ENCODE measurements at regions of chr16 and their contacts with region 1.

Region 1: DNA sequence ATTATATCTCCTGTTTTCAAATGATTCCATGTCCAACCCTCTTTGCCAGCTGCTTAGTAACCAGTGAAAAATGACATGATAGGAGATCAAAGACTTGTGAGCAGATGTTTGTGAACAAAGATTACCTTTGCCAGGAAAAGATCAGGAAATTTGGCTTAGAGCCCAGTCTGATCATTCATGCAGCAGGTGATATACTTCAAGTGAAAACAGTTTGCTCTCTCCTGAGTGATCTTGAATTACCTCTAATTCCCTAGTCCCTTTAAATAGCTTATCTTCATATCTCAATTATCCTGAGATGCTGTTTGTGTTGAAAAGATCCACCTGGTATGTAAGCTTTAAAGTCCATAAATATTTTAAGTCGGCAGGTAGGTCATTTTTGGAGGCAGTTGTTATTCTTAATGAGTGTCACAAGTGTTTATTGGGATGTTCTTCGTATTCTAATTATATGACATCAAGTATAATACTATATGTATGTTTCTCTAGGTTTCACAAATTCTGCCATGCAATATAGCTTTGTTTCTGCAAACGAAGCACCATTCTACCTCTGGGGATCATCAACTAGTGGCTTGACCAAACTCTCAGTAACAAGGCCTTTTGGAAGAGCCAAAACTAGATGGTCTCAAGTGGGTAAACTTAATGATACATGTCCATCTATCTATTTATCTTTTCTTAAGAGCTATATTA is 13.2 kb upstream of the VPS35L start:
- DNase-seq: no peak
- H3K4me3 ChIP-seq: no peak overlapping the region
- H3K27ac ChIP-seq: no peak overlapping the region
- H3K4me1 ChIP-seq: peaks cover 4% of the 10 kb centered on the region
- H3K27me3 ChIP-seq: no peaks in the 10 kb centered on the region
- CTCF ChIP-seq: no peak

Region 2: DNA sequence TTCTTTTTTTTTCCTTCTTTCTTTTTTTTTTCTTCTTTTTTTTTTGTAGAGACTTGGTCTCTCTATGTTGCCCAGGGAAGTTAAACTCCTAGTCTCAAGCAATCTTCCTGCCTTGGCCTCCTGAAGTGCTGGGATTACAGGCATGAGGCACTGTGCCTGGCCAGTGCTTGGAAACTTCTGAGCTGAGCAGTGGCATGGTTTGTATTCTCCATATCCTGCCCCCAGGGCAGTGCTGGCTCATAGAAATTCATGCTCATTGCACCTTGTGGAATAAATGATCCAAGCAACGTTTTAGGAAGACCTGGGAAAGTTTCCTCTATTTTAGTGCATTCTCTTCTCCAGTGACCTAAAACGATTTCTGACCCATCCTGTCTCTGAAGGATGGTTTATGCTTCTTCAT is 391.0 kb before region 1 on chr16:
- CTCF ChIA-PET with region 1: interaction called, 16 read pairs
- POLR2A ChIA-PET with region 1: no interaction called
- intact Hi-C with region 1: no loop called
- DNase-seq: no peak
- H3K4me3 ChIP-seq: no peak overlapping the region
- H3K27ac ChIP-seq: no peak overlapping the region
- H3K4me1 ChIP-seq: no peaks in the 10 kb centered on the region
- H3K27me3 ChIP-seq: no peaks in the 10 kb centered on the region; the same call in 1 of the 2 replicates
- CTCF ChIP-seq: no peak

Region 3: DNA sequence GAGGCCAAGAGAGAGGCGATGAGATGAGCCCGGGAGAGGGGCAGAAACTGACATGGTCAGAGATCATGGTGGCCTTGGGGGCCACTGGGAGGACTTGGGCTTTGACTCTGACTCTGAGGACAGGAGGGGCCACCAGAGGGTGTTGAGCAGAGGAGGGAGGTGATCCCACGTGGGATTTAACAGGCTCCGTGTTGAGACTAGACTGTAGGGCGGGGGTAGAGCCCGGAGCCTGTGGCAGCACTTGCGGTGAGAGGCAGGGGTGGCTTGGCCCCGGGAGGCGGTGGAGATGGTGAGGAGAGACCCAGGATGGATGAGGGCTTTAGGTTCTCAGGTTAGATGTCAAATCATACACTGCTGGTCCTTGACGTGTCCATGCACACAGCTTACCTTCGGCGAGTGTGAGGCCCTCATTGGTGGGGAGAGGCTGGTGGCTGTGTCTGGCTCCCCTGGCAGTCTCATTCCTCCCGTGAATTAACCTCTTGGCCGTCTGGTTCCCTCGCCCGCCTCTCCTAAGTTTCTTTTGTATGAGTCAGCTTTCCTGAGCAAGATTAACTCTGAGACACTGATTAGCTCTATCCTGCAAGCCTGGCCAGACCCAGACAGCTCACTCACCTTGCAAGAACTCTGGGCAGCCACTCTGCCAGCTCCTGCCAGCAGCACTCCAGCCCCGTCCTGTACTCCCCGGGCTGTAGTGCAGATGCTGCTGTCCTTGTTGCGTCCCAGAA is 52.9 kb after region 1 on chr16:
- CTCF ChIA-PET with region 1: no interaction called
- POLR2A ChIA-PET with region 1: interaction called, 11 read pairs
- intact Hi-C with region 1: no loop called
- DNase-seq: peak; percentile 84 to 90
- H3K4me3 ChIP-seq: no peak overlapping the region
- H3K27ac ChIP-seq: peak overlapping the region; percentile 23
- H3K4me1 ChIP-seq: peaks cover 26% of the 10 kb centered on the region
- H3K27me3 ChIP-seq: no peaks in the 10 kb centered on the region
- CTCF ChIP-seq: no peak